ENCODE measurements at regions of chr6 and their contacts with region 1.

Region 1: DNA sequence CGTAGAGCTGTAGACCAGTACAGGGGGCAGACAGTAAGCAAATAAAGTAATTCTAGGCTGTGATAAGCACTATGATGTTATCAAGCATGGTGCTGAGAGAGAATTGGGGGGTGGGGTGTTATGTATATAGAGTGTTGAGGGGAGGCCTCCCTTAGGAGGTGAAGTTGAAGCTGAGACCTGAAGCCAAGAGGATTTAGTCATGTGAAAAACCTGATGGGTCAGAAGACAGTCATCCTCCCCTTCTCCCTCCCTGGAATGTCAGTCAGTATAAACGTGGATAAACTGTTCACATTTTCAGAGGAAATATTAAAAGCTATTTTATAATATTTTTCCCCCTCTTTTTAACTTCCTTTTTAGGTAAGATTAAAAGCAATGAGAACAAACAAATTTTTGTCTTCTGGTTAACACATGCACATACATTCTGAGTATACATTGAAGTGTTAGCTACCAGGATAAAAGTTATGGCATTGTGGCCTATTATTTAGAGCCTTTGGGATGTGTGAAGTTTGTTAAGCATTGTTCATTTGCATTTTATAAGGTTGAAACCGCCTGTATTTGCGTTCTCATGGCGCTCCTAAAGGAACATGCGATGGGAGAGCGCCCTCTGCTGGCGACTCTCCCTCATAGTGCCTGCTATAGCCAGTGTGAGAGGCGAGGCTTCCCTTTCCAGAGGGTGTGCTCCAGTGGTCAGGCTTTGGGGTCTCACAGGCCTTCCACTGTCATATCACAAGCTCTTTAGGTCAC is 35.4 kb upstream of the MAPK13 start:
- DNase-seq: peak; percentile 70
- ATAC-seq: peak; percentile 93
- H3K4me3 Mint-ChIP-seq: no peak overlapping the region
- H3K27ac Mint-ChIP-seq: peak overlapping the region; percentile 30
- H3K4me1 Mint-ChIP-seq: peaks cover 33% of the 10 kb centered on the region
- H3K27me3 Mint-ChIP-seq: no peaks in the 10 kb centered on the region
- CTCF ChIP-seq: peak; percentile 32

Region 2: DNA sequence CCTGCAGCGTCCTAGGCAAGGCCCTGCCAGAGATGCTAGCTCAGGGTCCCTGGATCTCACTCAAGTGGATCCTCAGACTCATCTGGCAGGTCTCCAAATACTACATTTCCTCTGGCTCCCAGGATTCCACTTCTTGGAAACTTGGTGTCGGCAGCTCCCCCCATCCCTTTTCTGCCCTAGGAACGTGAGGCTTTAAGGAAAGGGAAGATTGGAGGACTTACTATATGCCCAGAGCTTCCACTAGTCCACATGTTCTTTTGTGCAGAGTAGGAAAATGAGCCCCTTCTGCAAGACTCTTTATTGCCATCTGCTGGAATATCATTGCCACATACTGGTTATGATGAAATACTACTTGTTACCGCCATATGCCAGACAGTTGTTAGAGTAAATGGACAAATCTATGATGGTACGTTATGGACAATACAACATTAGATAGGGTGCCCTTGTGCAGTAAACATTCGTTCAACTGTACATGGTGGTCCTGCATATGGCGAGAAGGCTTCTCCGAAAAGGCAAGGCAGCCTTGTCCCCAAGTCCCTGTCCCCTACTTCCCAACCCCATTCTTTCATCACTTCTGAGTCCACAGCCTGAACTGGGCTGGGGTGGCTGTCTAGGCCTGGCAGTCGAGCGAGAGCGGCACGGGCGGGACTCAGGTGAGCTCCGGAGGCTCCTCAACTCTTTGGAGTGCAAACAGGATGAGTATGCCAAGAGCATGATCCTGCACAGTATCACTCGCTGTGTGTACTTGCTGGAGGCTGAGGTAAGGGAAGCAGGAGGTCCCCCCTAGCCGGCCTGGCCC is 357.3 kb before region 1 on chr6:
- CTCF ChIA-PET with region 1: interaction called, 10 read pairs
- POLR2A ChIA-PET with region 1: no interaction called
- intact Hi-C with region 1: loop called (anchors 1 kb)
- DNase-seq: no peak
- ATAC-seq: peak; percentile 75
- H3K4me3 Mint-ChIP-seq: no peak overlapping the region
- H3K27ac Mint-ChIP-seq: peak overlapping the region; percentile 63
- H3K4me1 Mint-ChIP-seq: peaks cover 24% of the 10 kb centered on the region
- H3K27me3 Mint-ChIP-seq: no peaks in the 10 kb centered on the region
- CTCF ChIP-seq: peak; percentile 43

Region 3: GRCh38 chr6:36083446-36083845 is 11.5 kb before region 1 on chr6:
- CTCF ChIA-PET with region 1: interaction called, 16 read pairs
- POLR2A ChIA-PET with region 1: no interaction called
- intact Hi-C with region 1: no loop called
- DNase-seq: no peak
- ATAC-seq: no peak
- H3K4me3 Mint-ChIP-seq: no peak overlapping the region
- H3K27ac Mint-ChIP-seq: no peak overlapping the region
- H3K4me1 Mint-ChIP-seq: peaks cover 26% of the 10 kb centered on the region
- H3K27me3 Mint-ChIP-seq: no peaks in the 10 kb centered on the region
- CTCF ChIP-seq: no peak

Region 4: DNA sequence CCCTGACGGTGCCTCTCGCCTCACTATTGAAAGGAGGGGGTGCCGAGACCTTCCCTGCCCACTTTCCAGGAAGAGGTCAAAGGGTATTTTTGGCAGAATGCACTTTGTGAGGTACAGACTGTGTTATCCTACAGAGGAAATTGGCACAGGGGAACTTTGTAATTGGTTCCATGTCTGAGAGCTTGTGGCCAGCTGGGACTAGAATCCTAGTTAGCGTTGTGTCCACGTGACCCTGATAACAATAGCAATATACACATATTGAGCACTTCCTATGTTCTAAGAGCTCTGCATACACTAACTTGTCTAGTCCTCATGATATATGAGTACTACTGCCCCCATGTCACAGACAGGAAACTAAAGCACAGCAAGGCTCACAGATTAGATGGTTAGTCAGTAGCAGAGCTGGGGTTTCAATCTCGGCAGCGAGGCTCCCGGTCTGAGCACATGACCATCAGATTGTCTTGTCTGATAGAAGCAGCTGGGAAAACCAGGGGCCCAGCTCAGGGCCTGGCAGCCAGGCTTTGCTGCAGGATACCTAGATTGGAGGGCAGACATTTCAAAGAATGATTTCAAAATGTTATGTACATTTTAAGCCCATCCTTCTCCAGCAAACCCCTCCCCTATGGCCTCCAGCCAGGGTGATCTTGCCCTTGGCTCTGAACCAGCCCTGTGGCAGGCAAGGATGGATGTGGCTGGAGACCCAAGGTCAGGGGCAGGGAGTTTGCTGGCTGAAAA is 36.8 kb after region 1 on chr6:
- CTCF ChIA-PET with region 1: interaction called, 17 read pairs
- POLR2A ChIA-PET with region 1: interaction called, 3 read pairs
- intact Hi-C with region 1: no loop called
- DNase-seq: no peak
- ATAC-seq: peak; percentile 51
- H3K4me3 Mint-ChIP-seq: peak overlapping the region; percentile 86
- H3K27ac Mint-ChIP-seq: peak overlapping the region; percentile 69
- H3K4me1 Mint-ChIP-seq: peaks cover 53% of the 10 kb centered on the region
- H3K27me3 Mint-ChIP-seq: no peaks in the 10 kb centered on the region
- CTCF ChIP-seq: no peak

Region 5: DNA sequence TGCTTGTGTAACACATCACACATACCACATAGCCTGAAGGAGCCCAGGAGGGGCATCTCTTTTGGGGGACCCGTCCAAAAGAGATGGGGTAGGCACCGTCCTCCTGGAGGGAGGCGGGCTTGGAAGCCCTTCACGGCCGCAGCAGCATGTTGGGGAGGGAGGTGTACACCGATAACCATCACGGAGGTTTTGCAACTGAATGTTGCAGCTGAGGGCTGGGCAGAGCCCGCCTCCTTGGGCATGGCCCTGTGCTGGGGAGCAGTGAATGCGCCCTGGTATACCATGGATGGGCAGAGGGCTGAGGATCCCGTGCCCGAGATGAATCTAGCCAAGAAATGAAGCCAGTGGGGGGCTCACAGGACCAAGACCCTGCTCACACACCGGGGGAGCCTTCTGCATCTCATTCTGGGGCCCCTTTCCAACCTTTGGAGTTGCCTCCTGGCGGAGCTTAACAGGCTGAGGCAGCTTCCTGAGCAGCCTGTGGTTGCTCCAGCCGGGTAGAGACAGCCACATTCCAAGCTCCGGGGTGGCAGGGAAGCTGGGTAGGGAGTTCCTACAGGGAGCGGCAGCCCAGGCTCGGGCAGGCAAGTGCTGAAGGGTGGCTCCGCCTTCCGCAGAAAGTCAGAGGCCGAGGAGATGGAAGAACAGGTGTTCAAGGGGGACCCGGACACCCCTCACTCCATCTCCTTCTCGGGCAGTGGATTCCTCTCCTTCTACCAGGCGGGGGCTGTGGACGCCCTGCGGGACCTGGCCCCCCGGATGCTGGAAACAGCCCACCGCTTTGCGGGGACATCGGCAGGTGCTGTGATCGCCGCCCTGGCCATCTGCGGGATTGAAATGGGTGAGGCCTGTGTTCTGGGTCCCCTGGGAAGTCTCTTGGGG is 175.1 kb after region 1 on chr6 and contains the start of gene PNPLA1:
- CTCF ChIA-PET with region 1: no interaction called
- POLR2A ChIA-PET with region 1: no interaction called
- intact Hi-C with region 1: no loop called
- DNase-seq: no peak
- ATAC-seq: no peak
- H3K4me3 Mint-ChIP-seq: no peak within 1 kb of the TSS
- H3K27ac Mint-ChIP-seq: no peak within 1 kb of the TSS
- H3K4me1 Mint-ChIP-seq: no peaks in the 10 kb centered on the region
- H3K27me3 Mint-ChIP-seq: peaks cover 10% of the 10 kb centered on the region
- CTCF ChIP-seq: no peak
- total RNA-seq, gene PNPLA1: not detected in 2 replicates

Measured in activated B cell treated with CpG ODN at 0.5 μM for 24 hours (primary cell).